ENCODE measurements at regions of chr3 and their contacts with region 1.

Region 1: DNA sequence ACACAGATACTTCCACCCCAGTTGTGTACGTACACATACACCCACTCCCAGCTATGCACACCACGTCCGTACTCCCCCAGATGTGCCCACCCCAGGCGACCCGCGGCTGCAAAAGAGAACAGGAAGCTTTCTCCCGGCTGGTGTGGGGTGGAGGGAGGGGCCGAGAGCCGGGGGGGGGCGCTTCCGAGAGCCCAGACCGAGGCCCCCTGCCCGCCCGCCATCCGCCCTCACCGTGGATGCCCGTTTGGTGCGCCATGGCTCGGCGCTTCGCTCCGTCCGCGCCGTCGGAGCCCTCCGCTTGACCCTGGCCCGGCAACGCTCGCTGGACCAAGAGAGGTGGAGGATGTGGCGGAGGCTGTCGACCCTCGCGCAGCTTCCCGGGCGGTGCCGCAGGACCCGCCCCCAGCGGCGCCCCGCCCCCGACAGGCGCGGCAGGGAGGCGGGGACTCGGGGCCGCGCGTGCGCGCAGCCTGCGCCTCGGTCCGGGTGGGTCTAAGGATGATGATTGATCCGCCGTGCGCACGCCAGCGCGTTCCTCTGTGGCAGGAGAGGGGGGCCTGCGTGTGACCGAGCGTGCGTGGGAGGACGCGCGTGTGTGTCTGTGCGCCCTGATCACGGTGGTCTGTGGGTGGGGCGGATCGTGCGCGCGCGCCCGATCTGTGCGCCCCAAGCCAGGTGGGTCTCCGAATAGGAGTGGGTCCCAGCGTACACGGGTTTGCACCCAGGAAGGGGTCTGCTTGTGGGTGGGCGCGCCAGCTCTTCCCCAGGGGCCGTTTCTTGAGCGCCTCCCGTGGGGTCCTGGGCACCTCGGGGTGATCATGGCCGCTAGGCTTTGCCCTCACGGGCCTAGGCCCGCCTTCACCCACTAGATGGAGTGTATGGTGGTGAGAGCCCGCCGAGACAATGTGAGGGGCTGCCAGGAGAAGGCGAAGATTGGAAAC is at the start of gene TWF2:
- DNase-seq: peak; percentile 75 to 95 (median 89)

Region 2: GRCh38 chr3:52197842-52198668 is 41.0 kb before region 1 on chr3 and contains the start of gene ALAS1:
- intact Hi-C with region 1: loop called (anchors 5 kb)
- DNase-seq: peak; percentile 78 to 95 (median 90)

Region 3: GRCh38 chr3:52278510-52279069 is 39.6 kb after region 1 on chr3 and contains the start of gene WDR82:
- intact Hi-C with region 1: loop called (anchors 5 kb)
- DNase-seq: peak; percentile 92 to 100 (median 99)